ENCODE measurements at regions of chr9 and their contacts with region 1.

Region 1: GRCh38 chr9:108565651-108566378 is 290.0 kb downstream of the ACTL7B start:
- DNase-seq: peak; percentile 53
- CTCF ChIP-seq: peak; percentile 70

Region 2: DNA sequence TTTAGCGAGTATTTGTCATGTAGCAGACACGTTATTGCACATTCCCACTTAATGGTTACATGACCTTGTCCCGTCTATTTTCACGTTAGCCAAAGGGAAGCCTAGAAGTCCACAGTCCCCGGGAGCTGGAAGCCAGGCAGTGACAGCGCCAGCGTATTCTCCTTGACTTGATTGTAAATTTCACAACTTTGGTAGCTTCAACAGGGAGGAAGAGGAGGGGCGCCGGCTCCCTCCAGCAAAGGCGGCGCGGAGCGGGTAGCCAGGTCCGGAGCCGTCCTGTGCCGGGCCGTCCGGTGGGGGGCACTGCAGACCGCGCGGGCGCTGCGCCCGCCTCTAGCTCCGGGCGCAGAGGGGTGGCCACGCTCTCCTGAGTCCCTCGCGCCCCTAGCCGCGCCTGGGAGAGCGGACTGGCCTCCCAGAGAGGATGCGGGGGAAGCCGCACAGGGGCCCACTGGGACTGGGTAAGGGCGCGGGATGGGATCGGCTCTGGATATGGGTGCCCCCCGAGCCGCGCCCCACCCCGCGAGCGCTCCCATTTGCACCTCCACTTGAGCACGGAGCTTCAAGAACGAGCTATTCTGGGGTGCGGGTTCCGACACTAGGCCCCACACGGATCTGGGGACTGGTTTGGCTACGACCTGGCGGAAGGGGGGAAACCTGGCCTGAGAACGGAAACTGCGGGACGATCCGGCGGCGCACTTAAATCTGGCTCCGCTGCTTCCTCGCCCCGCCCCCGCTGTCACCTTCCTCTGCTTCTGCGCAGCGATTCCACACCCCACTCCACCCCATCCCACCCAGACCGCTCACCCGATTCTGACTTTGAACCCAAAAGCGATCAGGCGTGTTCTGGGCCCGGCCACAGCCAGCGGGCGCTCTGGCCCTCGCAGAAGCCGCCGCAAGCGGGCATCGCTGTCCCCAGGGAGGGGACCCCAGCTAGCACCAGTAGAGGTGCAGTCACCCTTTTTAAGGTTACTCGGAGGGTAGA is 1100.1 kb before region 1 on chr9:
- CTCF ChIA-PET with region 1: interaction called, 22 read pairs
- POLR2A ChIA-PET with region 1: no interaction called
- DNase-seq: peak; percentile 70
- CTCF ChIP-seq: peak; percentile 49

Region 3: DNA sequence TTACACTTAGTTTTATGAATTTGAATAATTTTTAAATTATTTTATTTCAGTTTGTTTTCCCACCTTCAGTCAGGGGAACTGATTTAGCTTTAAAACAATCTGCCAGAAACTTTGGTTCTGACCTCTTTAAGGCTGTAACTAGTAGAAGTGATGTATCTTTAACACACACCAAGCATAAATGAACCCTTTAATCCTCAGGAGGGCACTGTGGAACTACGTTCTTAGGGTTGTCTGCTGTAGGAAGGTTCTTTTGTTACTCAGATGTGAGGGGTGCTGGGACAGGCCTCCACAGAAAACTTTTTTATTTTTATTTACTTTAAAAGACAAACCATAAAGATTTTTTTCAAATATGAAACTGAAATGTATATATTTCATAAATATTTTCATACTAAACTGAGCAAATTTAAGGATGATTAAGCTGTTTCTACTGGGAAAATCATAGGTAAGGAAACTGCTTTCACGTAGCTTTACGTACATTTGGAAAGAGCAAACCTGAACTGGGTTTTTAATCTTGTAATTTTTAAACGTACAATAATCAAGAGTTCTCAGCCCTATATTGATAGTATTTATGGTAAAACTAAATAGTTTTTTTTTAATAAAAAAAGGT is 1081.6 kb before region 1 on chr9:
- CTCF ChIA-PET with region 1: interaction called, 10 read pairs
- POLR2A ChIA-PET with region 1: no interaction called
- DNase-seq: peak; percentile 40
- CTCF ChIP-seq: peak; percentile 39

Region 4: DNA sequence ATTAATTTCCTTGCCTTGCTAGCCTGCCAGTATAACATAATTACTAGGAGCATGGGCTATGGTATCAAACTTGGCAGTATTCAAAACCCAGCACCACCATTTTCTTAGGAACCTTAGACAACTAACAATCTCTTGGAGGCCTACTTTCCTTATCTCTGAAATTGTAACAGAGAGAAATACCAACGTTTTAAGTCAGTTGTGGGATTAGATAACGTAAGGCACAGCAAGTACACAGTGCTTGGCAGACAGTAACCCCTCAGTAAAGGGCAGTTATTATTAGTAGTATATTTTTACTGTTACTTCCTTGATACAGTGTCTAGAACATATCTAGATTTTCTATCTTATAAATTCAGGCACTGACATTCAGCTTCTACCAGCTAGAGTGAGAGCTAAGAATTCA is 19.6 kb before region 1 on chr9:
- CTCF ChIA-PET with region 1: interaction called, 11 read pairs
- POLR2A ChIA-PET with region 1: no interaction called
- DNase-seq: no peak
- CTCF ChIP-seq: no peak

Region 5: DNA sequence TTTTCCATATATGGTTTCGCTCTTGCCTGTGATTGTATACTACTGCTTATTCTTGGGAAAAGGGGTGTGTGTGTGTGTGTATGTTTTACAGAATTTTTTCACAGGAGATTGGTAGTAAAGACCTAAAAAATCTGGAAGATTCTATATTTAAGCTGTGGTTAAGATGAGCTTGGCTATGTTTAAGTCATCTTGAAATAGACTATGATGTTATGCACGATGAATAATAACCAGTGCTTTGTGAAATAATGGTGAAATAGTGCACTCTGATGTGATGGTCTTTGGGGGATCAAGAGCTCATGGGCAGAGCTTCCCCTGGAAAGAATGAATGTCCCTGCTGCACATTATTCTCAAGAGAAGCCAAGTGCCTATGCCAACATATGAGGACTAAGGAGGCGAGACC is 11.0 kb before region 1 on chr9:
- CTCF ChIA-PET with region 1: interaction called, 12 read pairs
- POLR2A ChIA-PET with region 1: no interaction called
- DNase-seq: no peak
- CTCF ChIP-seq: no peak

Measured in GM10248 (cell line).